Endothelial cell of umbilical vein (primary cell): ENCODE measurements at regions of chr14 and their contacts with region 1.

Region 1: DNA sequence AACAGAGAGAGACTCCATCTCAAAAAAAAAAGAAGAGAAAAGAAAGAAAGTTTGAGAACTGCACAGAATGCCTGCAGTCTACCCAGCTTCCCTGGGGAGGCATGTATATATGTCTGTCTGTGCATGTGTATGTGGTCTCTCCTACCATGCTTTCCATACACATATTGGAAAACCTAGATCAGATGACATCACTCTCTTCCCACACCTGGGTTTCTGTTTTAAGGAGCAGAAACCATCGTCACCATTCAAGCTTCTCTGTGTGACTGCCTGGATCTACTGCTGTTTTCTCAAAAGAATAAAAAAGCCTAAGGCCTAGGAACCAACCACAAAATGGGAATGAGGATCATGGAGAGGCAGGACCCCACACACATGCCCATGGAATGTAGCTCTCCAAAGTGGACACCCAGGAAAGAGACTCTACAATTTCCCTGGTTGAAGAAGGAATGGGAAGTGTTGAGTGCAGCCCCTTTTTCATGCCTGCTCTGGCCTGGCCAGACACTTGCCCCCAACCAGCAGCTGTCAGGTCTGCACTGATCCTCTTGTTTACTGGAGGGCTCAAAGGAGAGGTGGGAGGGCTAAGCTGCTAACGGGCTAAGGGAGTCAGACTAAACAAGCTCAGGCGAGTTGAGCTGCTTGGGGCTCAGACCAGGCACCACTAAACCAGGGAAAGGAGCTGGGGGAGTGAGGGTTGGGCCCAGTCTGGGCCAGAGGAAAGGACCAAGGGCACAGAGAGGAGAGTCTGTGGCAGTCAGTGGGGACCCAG is 7.7 kb upstream of the PCK2 start:
- DNase-seq: no peak
- H3K4me3 ChIP-seq: no peak overlapping the region
- H3K27ac ChIP-seq: no peak overlapping the region
- H3K4me1 ChIP-seq: no peaks in the 10 kb centered on the region
- H3K27me3 ChIP-seq: peaks cover 14 to 20% of the 10 kb centered on the region in 2 experiments
- CTCF ChIP-seq: no peak
- POLR2A ChIP-seq: no peak

Region 2: DNA sequence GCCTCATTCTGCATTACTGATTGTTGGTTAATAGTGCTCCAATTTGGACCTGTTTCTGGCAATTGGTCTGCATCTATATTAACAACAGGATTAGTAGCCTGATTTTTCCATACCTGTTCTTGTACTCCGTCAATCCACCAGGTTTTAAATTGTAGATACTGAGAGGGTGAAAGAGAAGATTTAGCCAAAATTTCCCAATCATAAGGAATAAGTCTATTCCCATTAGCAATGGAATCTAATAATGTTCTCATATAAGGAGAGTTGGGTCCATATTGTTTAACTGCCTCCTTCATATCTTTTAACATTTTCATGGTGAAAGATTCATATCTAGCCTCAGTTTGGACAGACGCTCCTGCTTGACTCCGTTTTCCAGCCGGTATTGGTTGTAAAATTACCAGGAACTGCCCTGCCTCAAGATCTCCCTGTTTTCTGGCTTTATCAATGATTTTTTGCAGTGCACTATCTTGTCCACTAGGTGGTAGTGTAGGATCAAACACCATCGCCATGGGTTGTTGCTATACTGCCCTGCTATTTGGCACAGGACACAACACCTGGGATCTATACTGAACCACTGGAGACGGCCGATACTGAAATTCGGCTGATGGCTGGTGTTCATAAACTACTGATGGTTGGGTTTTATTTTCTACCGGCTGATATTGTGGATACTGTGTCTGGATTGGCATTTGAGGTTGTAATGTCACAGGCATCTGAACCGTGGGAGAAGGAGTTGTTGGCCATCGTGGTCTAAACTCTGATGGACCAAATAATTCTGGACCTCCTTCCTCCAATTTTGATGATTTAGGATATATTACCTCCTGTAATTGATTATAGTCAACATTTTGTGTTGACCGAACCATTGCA is 72.5 kb before region 1 on chr14:
- CTCF ChIA-PET with region 1: no interaction called
- POLR2A ChIA-PET with region 1: no interaction called
- dilution Hi-C with region 1: no loop called
- intact Hi-C with region 1: loop called (anchors 1 kb)
- DNase-seq: peak; percentile 82
- H3K4me3 ChIP-seq: no peak overlapping the region
- H3K27ac ChIP-seq: no peak overlapping the region
- H3K4me1 ChIP-seq: peaks cover 3% of the 10 kb centered on the region
- H3K27me3 ChIP-seq: peaks cover 0 to 2% of the 10 kb centered on the region in 2 experiments
- CTCF ChIP-seq: peak; percentile 64 to 72
- POLR2A ChIP-seq: no peak

Region 3: DNA sequence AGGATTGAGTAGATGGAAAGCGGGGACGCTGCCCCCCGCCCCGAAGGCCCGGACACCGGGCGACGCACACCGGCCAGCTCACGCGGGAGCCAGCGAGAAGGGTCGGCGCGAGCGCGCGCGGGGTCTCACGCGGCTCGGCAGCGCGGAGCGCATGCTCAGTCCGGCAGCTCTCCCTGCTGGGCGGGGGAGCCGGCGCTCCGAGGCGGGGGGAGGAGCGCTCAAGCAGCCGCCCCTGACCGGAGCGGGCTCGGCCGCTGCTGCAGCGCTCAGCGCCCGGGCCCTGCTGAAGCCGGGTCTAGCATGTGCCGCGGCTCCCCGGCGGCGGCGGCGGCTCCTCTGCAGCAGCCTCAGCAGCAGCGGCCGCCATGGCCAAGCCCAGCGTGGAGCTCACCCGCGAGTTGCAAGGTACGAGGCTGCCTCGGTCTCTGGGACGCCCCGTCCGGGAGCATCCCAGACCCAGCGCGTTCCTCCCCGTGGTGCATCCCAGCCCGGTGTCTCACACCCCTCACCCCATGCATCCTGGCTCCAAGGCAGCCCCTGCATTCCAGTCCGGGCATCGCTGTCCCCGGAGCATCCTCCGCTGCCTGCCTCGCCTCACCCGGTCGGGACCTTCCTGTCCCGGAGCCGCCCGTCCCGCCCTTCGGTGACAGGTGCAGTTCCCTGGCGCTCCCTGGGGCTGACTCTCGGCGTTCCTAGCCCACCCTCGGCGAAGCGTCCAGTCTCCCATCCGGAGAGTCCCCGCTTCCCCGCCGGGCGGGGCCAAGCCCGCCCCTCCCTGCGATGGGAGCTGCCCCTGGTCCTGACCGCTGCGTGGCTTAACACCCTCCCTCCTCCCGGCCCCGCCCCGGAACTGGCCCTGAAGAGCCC is 34.4 kb before region 1 on chr14 and contains the start of gene CARMIL3:
- CTCF ChIA-PET with region 1: interaction called, 319 read pairs
- POLR2A ChIA-PET with region 1: interaction called, 8 read pairs
- dilution Hi-C with region 1: no loop called
- intact Hi-C with region 1: no loop called
- DNase-seq: peak; percentile 57
- H3K4me3 ChIP-seq: peak within 1 kb of the TSS; percentile 49 to 59 (median 54)
- H3K27ac ChIP-seq: no peak within 1 kb of the TSS
- H3K4me1 ChIP-seq: peaks cover 12% of the 10 kb centered on the region
- H3K27me3 ChIP-seq: peaks cover 6 to 17% of the 10 kb centered on the region in 2 experiments
- CTCF ChIP-seq: no peak
- POLR2A ChIP-seq: no peak
- total RNA-seq, gene CARMIL3: not detected in 2 replicates

Region 4: DNA sequence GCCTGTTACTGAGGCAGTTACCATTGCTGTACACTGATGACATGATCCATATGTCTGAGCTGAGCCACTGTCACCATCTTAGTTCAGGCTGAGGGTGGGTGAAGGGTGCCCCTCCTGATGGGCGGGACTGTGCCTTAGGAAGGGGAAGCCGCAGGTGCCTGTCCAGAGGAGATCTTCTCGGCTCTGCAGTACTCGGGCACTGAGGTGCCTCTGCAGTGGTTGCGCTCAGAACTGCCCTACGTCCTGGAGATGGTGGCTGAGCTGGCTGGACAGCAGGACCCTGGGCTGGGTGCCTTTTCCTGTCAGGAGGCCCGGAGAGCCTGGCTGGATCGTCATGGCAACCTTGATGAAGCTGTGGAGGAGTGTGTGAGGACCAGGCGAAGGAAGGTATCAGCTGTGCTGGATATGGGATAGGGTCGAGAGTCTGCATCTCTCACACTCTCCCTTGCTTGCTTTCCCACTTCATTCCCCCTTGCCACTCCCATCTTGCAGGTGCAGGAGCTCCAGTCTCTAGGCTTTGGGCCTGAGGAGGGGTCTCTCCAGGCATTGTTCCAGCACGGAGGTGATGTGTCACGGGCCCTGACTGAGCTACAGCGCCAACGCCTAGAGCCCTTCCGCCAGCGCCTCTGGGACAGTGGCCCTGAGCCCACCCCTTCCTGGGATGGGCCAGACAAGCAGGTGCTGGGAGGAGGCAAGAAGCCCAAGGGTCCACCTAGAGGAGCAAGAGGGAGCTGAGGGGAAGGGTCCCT is 64.8 kb after region 1 on chr14:
- CTCF ChIA-PET with region 1: no interaction called
- POLR2A ChIA-PET with region 1: no interaction called
- dilution Hi-C with region 1: no loop called
- intact Hi-C with region 1: no loop called
- DNase-seq: no peak
- H3K4me3 ChIP-seq: no peak overlapping the region
- H3K27ac ChIP-seq: no peak overlapping the region
- H3K4me1 ChIP-seq: peaks cover 8% of the 10 kb centered on the region
- H3K27me3 ChIP-seq: no peaks in the 10 kb centered on the region
- CTCF ChIP-seq: no peak
- POLR2A ChIP-seq: no peak

Region 5: DNA sequence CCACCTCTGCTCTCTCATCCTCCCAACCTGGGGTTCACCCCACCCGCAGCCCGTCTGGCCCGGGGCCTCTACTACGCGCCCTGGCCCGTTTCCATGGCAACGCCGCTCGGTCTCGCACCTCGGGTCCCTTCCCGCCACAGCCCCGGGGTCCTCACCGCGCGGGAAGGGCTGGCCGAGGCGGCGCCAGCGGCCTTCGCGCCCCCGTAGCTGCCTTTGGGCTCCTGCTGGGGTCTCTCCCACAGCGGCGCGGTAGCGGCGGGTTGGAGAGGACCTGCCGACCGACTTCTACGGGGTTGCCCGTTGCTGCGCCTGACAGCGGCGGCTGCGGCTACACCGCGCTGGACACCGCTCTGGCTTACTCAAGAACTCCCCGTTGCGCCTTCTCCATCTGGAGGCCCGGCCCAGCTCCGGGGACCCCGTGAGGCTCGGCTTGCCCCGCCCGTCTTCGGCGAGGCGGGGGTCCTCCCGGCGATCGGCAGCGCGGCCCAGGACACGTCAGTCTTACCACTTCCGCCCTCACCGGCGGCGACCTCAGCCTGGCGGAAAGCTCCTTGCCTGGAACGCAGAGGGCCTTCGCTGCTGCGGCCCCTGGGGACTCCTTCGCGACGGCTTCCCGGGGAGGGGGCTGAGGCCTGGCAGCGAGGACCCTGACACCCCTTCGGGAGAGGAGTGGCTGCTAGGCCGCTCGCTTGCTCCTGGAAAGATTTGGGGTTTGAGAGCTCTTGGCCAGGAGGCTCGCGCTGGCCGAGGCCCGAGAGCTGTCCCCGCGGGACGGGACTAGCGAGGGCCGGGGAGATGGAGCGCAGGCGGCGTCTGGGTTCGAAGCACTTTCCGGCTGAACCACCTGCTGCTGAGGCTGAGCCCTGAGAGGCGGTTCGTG is 109.1 kb after region 1 on chr14 and contains the start of gene TM9SF1:
- CTCF ChIA-PET with region 1: no interaction called
- POLR2A ChIA-PET with region 1: no interaction called
- dilution Hi-C with region 1: no loop called
- intact Hi-C with region 1: no loop called
- DNase-seq: peak; percentile 93
- H3K4me3 ChIP-seq: peak within 1 kb of the TSS; percentile 36 to 82 (median 69)
- H3K27ac ChIP-seq: peak within 1 kb of the TSS; percentile 93
- H3K4me1 ChIP-seq: peaks cover 16% of the 10 kb centered on the region
- H3K27me3 ChIP-seq: no peaks in the 10 kb centered on the region
- CTCF ChIP-seq: no peak
- POLR2A ChIP-seq: no peak
- total RNA-seq, gene TM9SF1: 58.5 and 60.7 TPM in 2 replicates